ENCODE measurements at regions of chr16 and their contacts with region 1.

Region 1: GRCh38 chr16:11639925-11640899 is 28.0 kb upstream of the SNN start:
- DNase-seq: peak; percentile 94 to 96
- H3K4me3 ChIP-seq: no peak overlapping the region
- CTCF ChIP-seq: peak in 1 of 3 donors; percentile 18
- POLR2A ChIP-seq: no peak

Region 2: GRCh38 chr16:10256784-10257641 is 1383.2 kb before region 1 on chr16:
- intact Hi-C with region 1: no loop called
- DNase-seq: no peak
- H3K4me3 ChIP-seq: no peak overlapping the region
- CTCF ChIP-seq: peak in 1 of 3 donors; percentile 36
- POLR2A ChIP-seq: no peak

Region 3: GRCh38 chr16:11410376-11411058 is 229.7 kb before region 1 on chr16:
- intact Hi-C with region 1: loop called (anchors 2 kb)
- DNase-seq: no peak
- H3K4me3 ChIP-seq: no peak overlapping the region
- CTCF ChIP-seq: no peak
- POLR2A ChIP-seq: no peak

Region 4: GRCh38 chr16:11727796-11728543 is 87.8 kb after region 1 on chr16:
- intact Hi-C with region 1: loop called (anchors 10 kb)
- DNase-seq: no peak
- H3K4me3 ChIP-seq: no peak overlapping the region
- CTCF ChIP-seq: no peak
- POLR2A ChIP-seq: no peak